GM23248 (cell line): ENCODE measurements at regions of chr19 and their contacts with region 1.

Region 1: GRCh38 chr19:18450931-18451845 is 13.3 kb upstream of the ISYNA1 start:
- DNase-seq: peak; percentile 80
- H3K4me3 ChIP-seq: no peak overlapping the region
- H3K27ac ChIP-seq: no peak overlapping the region
- H3K4me1 ChIP-seq: peaks cover 22% of the 10 kb centered on the region
- H3K27me3 ChIP-seq: no peaks in the 10 kb centered on the region

Region 2: GRCh38 chr19:18588611-18589379 is 137.6 kb after region 1 on chr19 and contains the start of gene REX1BD:
- in situ Hi-C with region 1: loop called (anchors 25 kb)
- DNase-seq: peak; percentile 87
- H3K4me3 ChIP-seq: peak within 1 kb of the TSS; percentile 79
- H3K27ac ChIP-seq: peak within 1 kb of the TSS; percentile 65
- H3K4me1 ChIP-seq: peaks cover 7% of the 10 kb centered on the region; the same call in 1 of the 2 replicates
- H3K27me3 ChIP-seq: no peaks in the 10 kb centered on the region
- total RNA-seq, gene REX1BD: 79.9 and 133 TPM in 2 replicates

Region 3: DNA sequence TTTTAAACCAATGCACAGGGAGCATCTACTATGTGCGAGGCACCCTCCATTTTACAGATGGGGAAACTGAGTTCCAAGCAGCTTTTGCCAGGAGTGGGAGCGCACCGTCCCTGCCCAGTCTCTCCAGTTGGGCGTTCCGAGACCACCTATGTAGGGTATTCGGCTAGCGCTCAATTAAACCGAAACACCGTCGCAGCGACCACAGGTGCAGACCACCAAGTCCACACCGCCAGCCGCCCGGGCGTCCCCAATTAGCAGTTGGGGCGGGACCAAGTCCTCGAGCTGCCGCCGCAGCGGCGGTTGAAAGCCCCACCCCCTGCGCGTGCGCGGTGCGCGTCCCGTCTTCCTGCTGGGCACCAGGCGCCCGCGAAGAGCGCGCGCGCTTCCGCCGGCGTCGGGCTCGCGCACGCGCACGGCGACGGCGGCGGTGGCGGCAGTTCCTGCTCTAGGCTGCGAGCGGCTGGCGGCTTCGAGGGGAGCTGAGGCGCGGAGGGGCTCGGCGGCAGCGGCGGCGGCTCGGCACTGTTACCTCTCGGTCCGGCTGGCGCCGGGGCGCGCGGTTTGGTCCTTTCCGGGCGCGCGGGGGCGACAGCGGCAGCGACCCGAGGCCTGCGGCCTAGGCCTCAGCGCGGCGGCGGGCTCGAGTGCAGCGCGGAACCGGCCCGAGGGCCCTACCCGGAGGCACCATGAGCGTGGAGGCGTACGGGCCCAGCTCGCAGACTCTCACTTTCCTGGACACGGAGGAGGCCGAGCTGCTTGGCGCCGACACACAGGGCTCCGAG is 380.5 kb after region 1 on chr19 and contains the start of gene UPF1:
- in situ Hi-C with region 1: loop called (anchors 25 kb)
- DNase-seq: peak; percentile 96
- H3K4me3 ChIP-seq: peak within 1 kb of the TSS; percentile 85
- H3K27ac ChIP-seq: peak within 1 kb of the TSS; percentile 59
- H3K4me1 ChIP-seq: peaks cover 11% of the 10 kb centered on the region
- H3K27me3 ChIP-seq: no peaks in the 10 kb centered on the region
- total RNA-seq, gene UPF1: 51.7 and 57.4 TPM in 2 replicates